Psoas muscle (tissue), 8 donors: ENCODE measurements at regions of chr5 and their contacts with region 1.

Region 1: GRCh38 chr5:153964880-153965645 is 73.6 kb downstream of the FAM114A2 start:
- DNase-seq: peak in 1 of 2 donors; percentile 33
- ATAC-seq: peak; percentile 28 to 64 (median 60)
- H3K4me3 ChIP-seq: no peak overlapping the region
- H3K27ac ChIP-seq: no peak overlapping the region
- H3K4me1 ChIP-seq: no peaks in the 10 kb centered on the region
- H3K27me3 ChIP-seq: no peaks in the 10 kb centered on the region
- CTCF ChIP-seq: peak; percentile 75

Region 2: GRCh38 chr5:152532714-152533113 is 1432.3 kb before region 1 on chr5:
- intact Hi-C with region 1: loop called (anchors 2 to 5 kb)
- DNase-seq: no peak
- ATAC-seq: no peak
- H3K4me3 ChIP-seq: no peak overlapping the region
- H3K27ac ChIP-seq: no peak overlapping the region
- H3K4me1 ChIP-seq: no peaks in the 10 kb centered on the region
- H3K27me3 ChIP-seq: no peaks in the 10 kb centered on the region
- CTCF ChIP-seq: peak; percentile 32

Region 3: DNA sequence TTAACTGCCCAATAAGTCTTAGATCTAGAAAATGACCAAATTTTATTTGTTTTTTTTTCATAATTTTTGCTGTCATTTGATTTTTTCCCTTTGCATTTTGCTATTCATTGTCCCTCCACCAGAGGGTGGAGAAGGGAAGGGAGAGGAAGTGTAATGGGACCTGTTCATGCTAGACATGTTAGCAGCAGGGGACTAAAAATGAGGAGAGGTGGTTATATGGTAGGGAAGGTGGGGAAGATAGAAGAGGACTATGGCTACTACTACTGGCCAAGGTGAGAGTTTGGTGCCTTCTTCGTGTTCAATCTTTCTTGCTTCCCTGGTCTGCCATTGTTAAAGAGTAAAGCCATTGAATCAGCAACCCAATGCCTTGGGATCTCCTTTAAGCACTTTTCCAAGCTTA is 468.2 kb before region 1 on chr5:
- intact Hi-C with region 1: loop called in 1 of 2 experiments (anchors 10 kb)
- DNase-seq: no peak
- ATAC-seq: no peak
- H3K4me3 ChIP-seq: no peak overlapping the region
- H3K27ac ChIP-seq: no peak overlapping the region
- H3K4me1 ChIP-seq: no peaks in the 10 kb centered on the region
- H3K27me3 ChIP-seq: peaks cover under 1 to 5% (median 3%) of the 10 kb centered on the region in 3 donors
- CTCF ChIP-seq: peak; percentile 42

Region 4: GRCh38 chr5:153979028-153979783 is 14.1 kb after region 1 on chr5:
- intact Hi-C with region 1: no loop called
- DNase-seq: no peak
- ATAC-seq: no peak
- H3K4me3 ChIP-seq: no peak overlapping the region
- H3K27ac ChIP-seq: no peak overlapping the region
- H3K4me1 ChIP-seq: no peaks in the 10 kb centered on the region
- H3K27me3 ChIP-seq: no peaks in the 10 kb centered on the region
- CTCF ChIP-seq: no peak